ENCODE measurements at regions of chr10 and their contacts with region 1.

Region 1: GRCh38 chr10:67884313-67884841 is at the start of gene SIRT1:
- DNase-seq: peak; percentile 98 to 100
- H3K4me3 ChIP-seq: peak within 1 kb of the TSS; percentile 63
- H3K4me3 Mint-ChIP-seq: peak within 1 kb of the TSS; percentile 90
- H3K27ac Mint-ChIP-seq: peak within 1 kb of the TSS; percentile 91
- H3K4me1 ChIP-seq: no peaks in the 10 kb centered on the region
- H3K4me1 Mint-ChIP-seq: no peaks in the 10 kb centered on the region
- H3K27me3 ChIP-seq: no peaks in the 10 kb centered on the region
- H3K27me3 Mint-ChIP-seq: no peaks in the 10 kb centered on the region
- CTCF ChIP-seq: peak in 1 of 2 experiments; percentile 23
- total RNA-seq, gene SIRT1: 43.1 and 44.1 TPM in 2 replicates

Region 2: GRCh38 chr10:67788025-67788886 is 96.1 kb before region 1 on chr10:
- CTCF ChIA-PET with region 1: no interaction called
- POLR2A ChIA-PET with region 1: no interaction called
- intact Hi-C with region 1: loop called (anchors 1 kb)
- DNase-seq: peak; percentile 61 to 69
- H3K4me3 ChIP-seq: no peak overlapping the region
- H3K4me3 Mint-ChIP-seq: no peak overlapping the region
- H3K27ac Mint-ChIP-seq: peak overlapping the region; percentile 18
- H3K4me1 ChIP-seq: no peaks in the 10 kb centered on the region
- H3K4me1 Mint-ChIP-seq: peaks cover 13% of the 10 kb centered on the region
- H3K27me3 ChIP-seq: no peaks in the 10 kb centered on the region
- H3K27me3 Mint-ChIP-seq: no peaks in the 10 kb centered on the region
- CTCF ChIP-seq: peak; percentile 57 to 80

Region 3: DNA sequence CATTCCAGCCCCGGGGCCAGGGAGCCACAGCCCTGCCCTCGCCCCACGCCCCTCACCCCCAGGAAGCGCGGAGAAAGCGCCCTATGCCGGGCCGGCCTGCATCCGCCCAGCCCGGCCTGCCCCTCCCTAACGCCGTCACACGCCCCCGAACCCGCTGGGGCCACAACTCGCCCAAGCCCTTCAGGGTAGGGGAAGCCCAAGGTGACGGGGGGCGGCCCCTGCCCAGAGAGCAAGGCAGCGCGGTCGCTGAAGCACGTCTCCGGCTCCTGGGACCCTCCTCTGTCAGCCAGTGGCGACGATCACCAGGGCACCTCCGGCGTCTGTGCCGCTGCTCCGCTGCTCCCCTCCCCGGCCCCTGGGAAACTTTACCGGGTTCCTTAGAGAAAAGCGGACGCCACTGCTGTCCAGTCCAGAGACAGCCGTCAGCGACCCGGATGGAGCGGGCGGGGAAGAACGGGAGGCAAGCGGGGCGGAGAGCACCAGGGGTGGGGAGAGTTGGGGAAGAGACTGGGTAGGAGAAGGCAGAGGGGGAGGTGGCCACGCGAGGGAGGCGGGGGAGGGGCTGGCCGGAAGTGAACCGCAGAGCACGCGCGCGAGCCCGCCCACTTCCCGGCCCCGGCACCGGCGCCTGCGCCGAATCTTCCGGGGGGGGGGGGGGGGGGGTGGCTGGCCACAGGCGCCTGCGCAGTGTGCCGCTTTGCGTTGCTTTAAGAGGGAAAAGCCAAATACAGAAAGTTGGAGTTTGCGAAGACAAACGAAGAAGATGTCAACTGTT is 190.6 kb after region 1 on chr10 and contains the start of gene HERC4:
- CTCF ChIA-PET with region 1: no interaction called
- POLR2A ChIA-PET with region 1: interaction called, 3 read pairs
- intact Hi-C with region 1: loop called (anchors 10 kb)
- DNase-seq: peak; percentile 98
- H3K4me3 ChIP-seq: peak within 1 kb of the TSS; percentile 91
- H3K4me3 Mint-ChIP-seq: peak within 1 kb of the TSS; percentile 97
- H3K27ac Mint-ChIP-seq: peak within 1 kb of the TSS; percentile 94
- H3K4me1 ChIP-seq: peaks cover 18% of the 10 kb centered on the region
- H3K4me1 Mint-ChIP-seq: peaks cover 18% of the 10 kb centered on the region
- H3K27me3 ChIP-seq: no peaks in the 10 kb centered on the region
- H3K27me3 Mint-ChIP-seq: no peaks in the 10 kb centered on the region
- CTCF ChIP-seq: no peak
- total RNA-seq, gene HERC4: 59.4 and 65.2 TPM in 2 replicates

Region 4: DNA sequence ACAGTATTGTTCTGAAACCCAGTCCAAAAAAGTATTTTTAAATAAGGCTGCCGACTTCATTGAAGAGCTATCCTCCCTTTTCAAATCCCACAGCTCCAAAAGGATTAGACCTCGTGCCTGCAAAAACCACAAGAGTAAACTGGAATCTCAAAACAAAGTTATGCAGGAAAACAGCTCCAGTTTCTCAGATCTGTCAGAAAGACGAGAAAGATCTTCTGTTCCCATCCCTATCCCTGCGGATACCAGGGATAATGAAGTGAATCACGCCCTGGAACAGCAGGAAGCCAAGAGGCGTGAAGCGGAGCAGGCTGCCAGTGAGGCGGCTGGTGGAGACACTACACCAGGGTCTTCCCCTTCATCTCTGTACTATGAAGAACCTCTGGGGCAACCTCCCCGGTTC is 237.5 kb after region 1 on chr10:
- CTCF ChIA-PET with region 1: no interaction called
- POLR2A ChIA-PET with region 1: interaction called, 11 read pairs
- intact Hi-C with region 1: no loop called
- DNase-seq: no peak
- H3K4me3 ChIP-seq: no peak overlapping the region
- H3K4me3 Mint-ChIP-seq: no peak overlapping the region
- H3K27ac Mint-ChIP-seq: no peak overlapping the region
- H3K4me1 ChIP-seq: peaks cover 22% of the 10 kb centered on the region
- H3K4me1 Mint-ChIP-seq: peaks cover 13% of the 10 kb centered on the region
- H3K27me3 ChIP-seq: no peaks in the 10 kb centered on the region
- H3K27me3 Mint-ChIP-seq: peaks cover 2% of the 10 kb centered on the region
- CTCF ChIP-seq: no peak

Measured in Caco-2 (cell line).